BJ (cell line): ENCODE measurements at regions of chr9 and their contacts with region 1.

Region 1: GRCh38 chr9:136558373-136558772 is 12.5 kb upstream of the NOTCH1 start:
- DNase-seq: no peak
- H3K4me3 ChIP-seq: no peak overlapping the region
- H3K27me3 ChIP-seq: no peaks in the 10 kb centered on the region
- CTCF ChIP-seq: no peak

Region 2: DNA sequence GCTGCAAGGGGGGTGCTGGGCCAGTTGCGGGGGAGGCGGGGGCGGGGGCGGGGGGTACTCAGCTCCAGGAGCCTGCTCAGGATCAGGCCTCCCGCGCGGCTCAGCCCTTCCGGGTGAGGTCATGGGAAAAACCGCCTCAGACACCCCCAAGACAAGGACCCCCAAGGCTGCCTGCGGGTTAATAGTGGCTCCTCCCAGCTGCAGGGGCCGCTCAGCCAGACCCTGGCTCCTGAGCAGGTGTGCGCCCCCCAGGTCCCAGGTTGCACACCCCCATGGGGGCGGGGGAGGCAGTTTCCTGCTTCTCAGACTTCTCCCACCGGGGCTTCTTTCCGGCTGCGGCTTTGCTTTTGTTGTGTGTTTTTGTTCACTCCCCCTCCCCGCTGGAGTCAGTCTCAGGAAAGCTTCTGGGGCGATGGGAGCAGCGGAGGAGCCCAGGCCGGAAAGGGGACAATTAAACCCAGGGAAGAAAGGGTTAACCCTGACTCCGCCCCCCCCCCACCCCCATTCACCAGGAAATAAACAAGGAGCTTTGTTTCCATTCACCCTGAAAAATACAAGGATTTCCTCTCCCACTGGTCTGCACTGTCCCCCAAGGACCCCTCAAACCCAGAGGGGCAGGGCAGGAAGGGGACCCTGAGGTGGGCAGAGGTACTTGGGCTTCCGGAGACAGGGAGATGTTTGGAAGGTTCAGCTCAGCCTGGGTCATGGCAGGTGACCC is 29.7 kb after region 1 on chr9:
- CTCF ChIA-PET with region 1: no interaction called
- POLR2A ChIA-PET with region 1: no interaction called
- DNase-seq: no peak
- H3K4me3 ChIP-seq: no peak overlapping the region
- H3K27me3 ChIP-seq: peaks cover 2% of the 10 kb centered on the region
- CTCF ChIP-seq: no peak

Region 3: GRCh38 chr9:136599811-136600660 is 41.7 kb after region 1 on chr9:
- CTCF ChIA-PET with region 1: no interaction called
- POLR2A ChIA-PET with region 1: no interaction called
- DNase-seq: no peak
- H3K4me3 ChIP-seq: no peak overlapping the region
- H3K27me3 ChIP-seq: peaks cover 4% of the 10 kb centered on the region
- CTCF ChIP-seq: no peak

Region 4: GRCh38 chr9:136631038-136632000 is 72.9 kb after region 1 on chr9:
- CTCF ChIA-PET with region 1: interaction called, 3 read pairs
- POLR2A ChIA-PET with region 1: interaction called, 18 read pairs
- DNase-seq: no peak
- H3K4me3 ChIP-seq: no peak overlapping the region
- H3K27me3 ChIP-seq: no peaks in the 10 kb centered on the region
- CTCF ChIP-seq: peak; percentile 86